SK-N-SH (cell line): ENCODE measurements at regions of chr3 and their contacts with region 1.

Region 1: GRCh38 chr3:184513276-184514170 is 48.1 kb upstream of the EPHB3 start:
- DNase-seq: peak; percentile 94
- H3K4me3 ChIP-seq: peak overlapping the region; percentile 33 to 55
- H3K27ac ChIP-seq: no peak overlapping the region
- H3K4me1 ChIP-seq: peaks cover 0 to 7% of the 10 kb centered on the region in 2 experiments; a peak in 1 of 4 replicates
- H3K27me3 ChIP-seq: peaks cover 52% of the 10 kb centered on the region
- CTCF ChIP-seq: peak; percentile 76
- EP300 ChIP-seq: no peak
- RAD21 ChIP-seq: peak; percentile 81

Region 2: GRCh38 chr3:184371570-184372018 is 141.9 kb before region 1 on chr3:
- CTCF ChIA-PET with region 1: interaction called, 142 read pairs
- POLR2A ChIA-PET with region 1: interaction called, 4 read pairs
- DNase-seq: peak; percentile 85
- H3K4me3 ChIP-seq: no peak overlapping the region; a peak in 1 of 4 replicates
- H3K27ac ChIP-seq: no peak overlapping the region
- H3K4me1 ChIP-seq: peaks cover 0 to 26% of the 10 kb centered on the region in 2 experiments; a peak in 3 of 4 replicates
- H3K27me3 ChIP-seq: no peaks in the 10 kb centered on the region
- CTCF ChIP-seq: peak; percentile 92
- EP300 ChIP-seq: no peak
- RAD21 ChIP-seq: peak; percentile 97

Region 3: GRCh38 chr3:184423561-184423960 is 90.0 kb before region 1 on chr3:
- CTCF ChIA-PET with region 1: interaction called, 73 read pairs
- POLR2A ChIA-PET with region 1: no interaction called
- DNase-seq: no peak
- H3K4me3 ChIP-seq: no peak overlapping the region
- H3K27ac ChIP-seq: no peak overlapping the region
- H3K4me1 ChIP-seq: no peaks in the 10 kb centered on the region
- H3K27me3 ChIP-seq: no peaks in the 10 kb centered on the region
- CTCF ChIP-seq: no peak
- EP300 ChIP-seq: no peak
- RAD21 ChIP-seq: no peak

Region 4: DNA sequence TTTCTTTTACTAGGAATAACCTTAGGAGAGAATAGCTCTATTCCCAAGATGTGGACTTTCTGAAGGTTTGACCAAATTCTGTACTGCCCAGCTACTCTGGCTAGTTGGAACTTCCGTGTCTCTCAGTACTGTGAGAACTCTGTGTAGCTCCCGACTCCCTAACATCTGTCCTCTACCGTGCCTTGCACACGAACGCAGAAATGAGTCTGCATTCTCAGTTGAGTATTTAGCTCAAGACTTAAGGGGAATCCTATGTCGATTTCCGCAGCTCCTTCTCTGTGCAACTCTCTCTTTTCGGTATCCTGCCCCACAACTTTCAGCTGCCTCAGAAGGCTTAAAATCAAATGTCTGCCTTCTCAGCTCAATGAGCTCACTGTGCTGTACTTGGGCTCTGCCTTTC is 38.6 kb before region 1 on chr3:
- CTCF ChIA-PET with region 1: interaction called, 85 read pairs
- POLR2A ChIA-PET with region 1: no interaction called
- DNase-seq: no peak
- H3K4me3 ChIP-seq: no peak overlapping the region
- H3K27ac ChIP-seq: no peak overlapping the region
- H3K4me1 ChIP-seq: no peaks in the 10 kb centered on the region
- H3K27me3 ChIP-seq: peaks cover 37% of the 10 kb centered on the region; the same call in 1 of the 2 replicates
- CTCF ChIP-seq: no peak
- EP300 ChIP-seq: no peak
- RAD21 ChIP-seq: no peak

Region 5: DNA sequence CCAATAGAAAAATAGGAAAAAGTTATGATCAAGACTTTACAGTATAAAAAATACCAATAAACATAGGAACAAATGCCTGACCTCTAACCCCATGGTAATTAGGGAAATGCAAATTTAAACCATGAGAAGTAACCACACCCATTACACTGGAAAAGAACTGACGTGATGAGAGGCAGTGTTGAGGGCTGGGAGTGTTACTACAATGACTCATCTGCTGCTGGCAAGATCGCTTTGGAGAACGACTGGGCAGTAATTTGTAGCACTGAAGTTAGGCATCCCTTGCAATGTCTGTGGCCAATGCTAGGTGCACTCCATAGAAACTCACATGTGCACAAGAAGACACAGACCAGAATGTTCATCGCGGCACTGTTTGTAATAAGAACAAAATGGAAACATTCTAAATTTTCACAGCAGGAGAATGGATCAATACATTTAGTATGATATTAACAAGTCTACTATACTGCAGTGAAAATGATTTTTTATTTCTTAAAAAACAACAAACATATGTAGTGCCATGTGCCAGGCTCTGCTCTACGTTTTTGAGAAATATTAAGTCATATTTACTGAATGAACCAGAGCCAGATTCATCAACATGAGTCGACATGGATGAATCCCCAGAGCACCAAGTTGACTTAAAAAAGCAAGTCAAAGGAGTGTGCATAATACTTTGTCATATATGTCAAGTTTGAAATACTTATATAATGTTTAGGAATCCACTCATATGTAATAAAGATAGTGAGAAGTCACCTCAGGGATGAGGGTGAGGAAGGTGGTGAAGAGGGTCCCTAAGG is 10.5 kb after region 1 on chr3:
- CTCF ChIA-PET with region 1: interaction called, 29 read pairs
- POLR2A ChIA-PET with region 1: interaction called, 7 read pairs
- DNase-seq: no peak
- H3K4me3 ChIP-seq: no peak overlapping the region
- H3K27ac ChIP-seq: no peak overlapping the region
- H3K4me1 ChIP-seq: peaks cover 0 to 3% of the 10 kb centered on the region in 2 experiments; a peak in 1 of 4 replicates
- H3K27me3 ChIP-seq: peaks cover 51% of the 10 kb centered on the region
- CTCF ChIP-seq: no peak
- EP300 ChIP-seq: no peak
- RAD21 ChIP-seq: no peak

Region 6: GRCh38 chr3:184543843-184544512 is 30.5 kb after region 1 on chr3:
- CTCF ChIA-PET with region 1: interaction called, 54 read pairs
- POLR2A ChIA-PET with region 1: no interaction called
- DNase-seq: peak; percentile 83
- H3K4me3 ChIP-seq: peak overlapping the region in 1 of 2 experiments; percentile 50; a peak in 1 of 4 replicates
- H3K27ac ChIP-seq: no peak overlapping the region
- H3K4me1 ChIP-seq: peaks cover 0 to 4% of the 10 kb centered on the region in 2 experiments; a peak in 1 of 4 replicates
- H3K27me3 ChIP-seq: peaks cover 24% of the 10 kb centered on the region
- CTCF ChIP-seq: peak; percentile 87
- EP300 ChIP-seq: no peak
- RAD21 ChIP-seq: peak; percentile 94

Region 7: DNA sequence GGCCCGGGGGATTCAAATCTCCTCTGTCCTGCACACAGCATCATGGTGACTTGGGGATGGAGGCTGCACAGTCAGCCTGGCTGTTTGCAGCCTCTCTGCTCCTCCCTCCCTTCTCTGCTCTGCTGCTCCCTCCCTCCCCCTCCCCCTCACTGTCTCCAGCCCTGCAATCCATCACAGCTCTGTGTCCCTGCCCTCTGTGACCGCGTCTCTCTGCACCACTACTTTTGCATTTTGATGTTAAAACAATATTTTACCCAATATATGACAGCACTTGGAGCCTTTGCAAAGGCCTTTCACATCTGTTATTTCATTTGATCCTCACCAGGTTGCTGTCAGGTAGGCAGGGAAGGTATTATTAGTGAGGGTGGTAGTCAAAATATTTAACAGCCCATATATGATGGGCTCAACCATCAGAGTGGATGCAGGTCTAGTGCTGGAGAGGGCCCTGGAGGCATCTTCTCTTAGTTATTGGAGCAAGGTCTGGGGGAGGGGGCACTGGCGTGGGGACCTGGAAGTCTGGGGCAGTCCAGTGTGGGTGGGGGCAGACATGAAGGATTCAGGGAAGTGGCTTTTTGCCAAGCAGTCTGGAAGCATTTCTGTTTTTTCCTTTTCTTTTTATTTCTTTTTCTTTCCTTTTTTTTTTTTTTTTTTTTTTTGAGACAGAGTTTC is 282.1 kb after region 1 on chr3:
- CTCF ChIA-PET with region 1: no interaction called
- POLR2A ChIA-PET with region 1: no interaction called
- DNase-seq: peak; percentile 80
- H3K4me3 ChIP-seq: no peak overlapping the region
- H3K27ac ChIP-seq: no peak overlapping the region
- H3K4me1 ChIP-seq: peaks cover 0 to 8% of the 10 kb centered on the region in 2 experiments; a peak in 1 of 4 replicates
- H3K27me3 ChIP-seq: no peaks in the 10 kb centered on the region; the same call in 1 of the 2 replicates
- CTCF ChIP-seq: no peak
- EP300 ChIP-seq: no peak
- RAD21 ChIP-seq: no peak

Region 8: DNA sequence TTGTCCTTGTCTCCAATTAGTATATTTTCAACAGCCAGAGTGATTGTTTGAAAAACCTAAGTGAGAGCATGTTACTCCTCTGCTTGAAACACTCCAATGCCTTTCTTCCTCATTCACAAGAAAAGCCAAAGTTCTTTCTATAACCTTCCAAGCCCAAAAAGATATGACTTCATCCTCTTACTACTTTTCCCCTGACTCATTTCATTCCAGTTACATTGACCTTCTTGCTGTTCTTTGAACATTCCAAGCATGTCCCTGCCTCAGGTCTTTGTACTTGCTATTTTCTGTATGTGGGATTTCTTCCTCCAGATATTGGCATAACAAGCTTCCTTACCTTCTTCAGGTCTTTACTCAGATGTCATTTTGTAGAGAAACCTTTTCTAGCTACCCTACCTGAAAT is 712.0 kb after region 1 on chr3:
- CTCF ChIA-PET with region 1: no interaction called
- POLR2A ChIA-PET with region 1: no interaction called
- DNase-seq: no peak
- H3K4me3 ChIP-seq: no peak overlapping the region
- H3K27ac ChIP-seq: no peak overlapping the region
- H3K4me1 ChIP-seq: no peaks in the 10 kb centered on the region; a peak in 1 of 4 replicates
- H3K27me3 ChIP-seq: no peaks in the 10 kb centered on the region
- CTCF ChIP-seq: no peak
- EP300 ChIP-seq: no peak
- RAD21 ChIP-seq: no peak